CD8-positive, alpha-beta T cell (primary cell): ENCODE measurements at regions of chr6 and their contacts with region 1.

Region 1: GRCh38 chr6:32984605-32985389 is 16.4 kb downstream of the BRD2 start:
- DNase-seq: peak; percentile 82 to 94 (median 91)
- ATAC-seq: peak; percentile 96
- H3K4me3 ChIP-seq: no peak overlapping the region
- H3K4me3 Mint-ChIP-seq: no peak overlapping the region
- H3K27ac ChIP-seq: peak overlapping the region in 1 of 2 experiments; percentile 44
- H3K27ac Mint-ChIP-seq: no peak overlapping the region
- H3K4me1 ChIP-seq: peaks cover 5% of the 10 kb centered on the region
- H3K4me1 Mint-ChIP-seq: peaks cover 20% of the 10 kb centered on the region
- H3K27me3 ChIP-seq: no peaks in the 10 kb centered on the region
- H3K27me3 Mint-ChIP-seq: no peaks in the 10 kb centered on the region
- CTCF ChIP-seq: peak; percentile 87

Region 2: GRCh38 chr6:32843979-32844838 is 140.6 kb before region 1 on chr6 and contains the start of gene PSMB8:
- CTCF ChIA-PET with region 1: interaction called, 38 read pairs
- POLR2A ChIA-PET with region 1: interaction called, 8 read pairs
- intact Hi-C with region 1: no loop called
- DNase-seq: peak; percentile 96 to 99 (median 99)
- ATAC-seq: peak; percentile 75
- H3K4me3 ChIP-seq: peak within 1 kb of the TSS; percentile 99
- H3K4me3 Mint-ChIP-seq: peak within 1 kb of the TSS; percentile 99
- H3K27ac ChIP-seq: peak within 1 kb of the TSS; percentile 96 to 100
- H3K27ac Mint-ChIP-seq: peak within 1 kb of the TSS; percentile 99
- H3K4me1 ChIP-seq: peaks cover 79% of the 10 kb centered on the region
- H3K4me1 Mint-ChIP-seq: peaks cover 83% of the 10 kb centered on the region
- H3K27me3 ChIP-seq: no peaks in the 10 kb centered on the region
- H3K27me3 Mint-ChIP-seq: no peaks in the 10 kb centered on the region
- CTCF ChIP-seq: no peak
- total RNA-seq, gene PSMB8: 108 to 117 TPM

Region 3: GRCh38 chr6:32906539-32906938 is 78.3 kb before region 1 on chr6:
- CTCF ChIA-PET with region 1: interaction called, 25 read pairs
- POLR2A ChIA-PET with region 1: no interaction called
- intact Hi-C with region 1: no loop called
- DNase-seq: no peak
- ATAC-seq: no peak
- H3K4me3 ChIP-seq: no peak overlapping the region
- H3K4me3 Mint-ChIP-seq: no peak overlapping the region
- H3K27ac ChIP-seq: no peak overlapping the region
- H3K27ac Mint-ChIP-seq: no peak overlapping the region
- H3K4me1 ChIP-seq: no peaks in the 10 kb centered on the region
- H3K4me1 Mint-ChIP-seq: no peaks in the 10 kb centered on the region
- H3K27me3 ChIP-seq: no peaks in the 10 kb centered on the region
- H3K27me3 Mint-ChIP-seq: peaks cover 6% of the 10 kb centered on the region
- CTCF ChIP-seq: no peak

Region 4: GRCh38 chr6:32940656-32941213 is 44.1 kb before region 1 on chr6 and contains the start of gene HLA-DMB:
- CTCF ChIA-PET with region 1: interaction called, 46 read pairs
- POLR2A ChIA-PET with region 1: interaction called, 11 read pairs
- intact Hi-C with region 1: no loop called
- DNase-seq: peak in 7 of 9 experiments; percentile 18 to 91 (median 51)
- ATAC-seq: peak; percentile 78
- H3K4me3 ChIP-seq: peak within 1 kb of the TSS; percentile 64 to 79
- H3K4me3 Mint-ChIP-seq: peak within 1 kb of the TSS; percentile 94
- H3K27ac ChIP-seq: peak within 1 kb of the TSS; percentile 72 to 91
- H3K27ac Mint-ChIP-seq: peak within 1 kb of the TSS; percentile 97
- H3K4me1 ChIP-seq: peaks cover 61% of the 10 kb centered on the region
- H3K4me1 Mint-ChIP-seq: peaks cover 62% of the 10 kb centered on the region
- H3K27me3 ChIP-seq: no peaks in the 10 kb centered on the region
- H3K27me3 Mint-ChIP-seq: no peaks in the 10 kb centered on the region
- CTCF ChIP-seq: no peak
- total RNA-seq, gene HLA-DMB: 8.9 to 9.9 TPM

Region 5: GRCh38 chr6:32962213-32962826 is 22.5 kb before region 1 on chr6:
- CTCF ChIA-PET with region 1: interaction called, 662 read pairs
- POLR2A ChIA-PET with region 1: interaction called, 229 read pairs
- intact Hi-C with region 1: loop called in 1 of 2 experiments (anchors 2 kb)
- DNase-seq: no peak
- ATAC-seq: no peak
- H3K4me3 ChIP-seq: no peak overlapping the region
- H3K4me3 Mint-ChIP-seq: no peak overlapping the region
- H3K27ac ChIP-seq: no peak overlapping the region
- H3K27ac Mint-ChIP-seq: peak overlapping the region; percentile 28
- H3K4me1 ChIP-seq: peaks cover 25% of the 10 kb centered on the region
- H3K4me1 Mint-ChIP-seq: peaks cover 59% of the 10 kb centered on the region
- H3K27me3 ChIP-seq: no peaks in the 10 kb centered on the region
- H3K27me3 Mint-ChIP-seq: no peaks in the 10 kb centered on the region
- CTCF ChIP-seq: no peak

Region 6: GRCh38 chr6:34202329-34203201 is 1217.8 kb after region 1 on chr6:
- CTCF ChIA-PET with region 1: no interaction called
- POLR2A ChIA-PET with region 1: no interaction called
- intact Hi-C with region 1: no loop called
- DNase-seq: no peak
- ATAC-seq: no peak
- H3K4me3 ChIP-seq: no peak overlapping the region
- H3K4me3 Mint-ChIP-seq: no peak overlapping the region
- H3K27ac ChIP-seq: no peak overlapping the region
- H3K27ac Mint-ChIP-seq: no peak overlapping the region
- H3K4me1 ChIP-seq: no peaks in the 10 kb centered on the region
- H3K4me1 Mint-ChIP-seq: peaks cover 4% of the 10 kb centered on the region
- H3K27me3 ChIP-seq: no peaks in the 10 kb centered on the region
- H3K27me3 Mint-ChIP-seq: no peaks in the 10 kb centered on the region
- CTCF ChIP-seq: no peak